ENCODE measurements at regions of chr12 and their contacts with region 1.

Region 1: DNA sequence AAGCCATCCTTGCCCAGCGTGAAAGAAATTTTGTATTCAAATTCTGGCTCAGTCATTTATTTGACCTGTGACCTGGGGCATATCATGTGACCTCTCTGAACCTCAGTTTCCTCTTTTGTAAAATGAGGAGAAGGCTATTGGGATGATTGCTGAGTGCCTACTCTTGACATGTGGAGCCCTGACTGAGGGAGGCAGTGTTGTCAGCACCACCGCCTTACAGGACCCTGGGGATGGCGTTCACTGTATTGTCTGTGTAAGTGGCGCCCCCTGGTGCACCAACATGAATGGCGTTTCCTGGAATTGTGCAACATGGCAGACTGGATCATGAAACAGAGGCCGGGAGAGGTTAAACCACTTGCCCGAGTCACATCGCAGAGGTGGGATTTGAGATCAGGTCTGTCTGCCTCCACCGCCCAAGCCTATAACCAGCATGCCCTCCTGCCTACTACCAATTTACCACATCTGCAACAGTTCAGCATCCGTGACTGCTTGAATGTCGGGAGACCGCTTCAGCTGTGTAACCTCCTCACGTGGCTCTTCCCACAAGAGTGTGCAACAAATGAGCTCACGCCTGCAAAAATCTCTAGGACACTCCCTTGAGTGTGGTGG is 20.1 kb upstream of the CCDC63 start:
- DNase-seq: peak; percentile 80
- H3K4me3 ChIP-seq: no peak overlapping the region
- H3K27ac ChIP-seq: no peak overlapping the region
- H3K4me1 ChIP-seq: no peaks in the 10 kb centered on the region
- H3K27me3 ChIP-seq: no peaks in the 10 kb centered on the region
- CTCF ChIP-seq: peak; percentile 80 to 83

Region 2: GRCh38 chr12:110513842-110514241 is 312.9 kb before region 1 on chr12:
- CTCF ChIA-PET with region 1: no interaction called
- dilution Hi-C with region 1: no loop called
- in situ Hi-C with region 1: no loop called
- intact Hi-C with region 1: loop called (anchors 10 kb)
- DNase-seq: no peak
- H3K4me3 ChIP-seq: no peak overlapping the region
- H3K27ac ChIP-seq: no peak overlapping the region
- H3K4me1 ChIP-seq: no peaks in the 10 kb centered on the region
- H3K27me3 ChIP-seq: no peaks in the 10 kb centered on the region
- CTCF ChIP-seq: no peak

Region 3: GRCh38 chr12:110704748-110705147 is 121.9 kb before region 1 on chr12:
- CTCF ChIA-PET with region 1: no interaction called
- dilution Hi-C with region 1: no loop called
- in situ Hi-C with region 1: loop called in 1 of 2 experiments (anchors 10 kb)
- intact Hi-C with region 1: loop called (anchors 1 kb)
- DNase-seq: peak; percentile 24
- H3K4me3 ChIP-seq: no peak overlapping the region
- H3K27ac ChIP-seq: no peak overlapping the region
- H3K4me1 ChIP-seq: no peaks in the 10 kb centered on the region
- H3K27me3 ChIP-seq: no peaks in the 10 kb centered on the region
- CTCF ChIP-seq: peak; percentile 39 to 75

Region 4: GRCh38 chr12:110742718-110743570 is 83.8 kb before region 1 on chr12 and contains the start of gene PPP1CC:
- CTCF ChIA-PET with region 1: no interaction called
- dilution Hi-C with region 1: no loop called
- in situ Hi-C with region 1: no loop called
- intact Hi-C with region 1: loop called (anchors 1 kb)
- DNase-seq: peak; percentile 90
- H3K4me3 ChIP-seq: peak within 1 kb of the TSS; percentile 69 to 85 (median 79)
- H3K27ac ChIP-seq: peak within 1 kb of the TSS; percentile 71
- H3K4me1 ChIP-seq: peaks cover 35% of the 10 kb centered on the region
- H3K27me3 ChIP-seq: no peaks in the 10 kb centered on the region
- CTCF ChIP-seq: no peak
- total RNA-seq, gene PPP1CC: 91.0 to 116 TPM

Region 5: DNA sequence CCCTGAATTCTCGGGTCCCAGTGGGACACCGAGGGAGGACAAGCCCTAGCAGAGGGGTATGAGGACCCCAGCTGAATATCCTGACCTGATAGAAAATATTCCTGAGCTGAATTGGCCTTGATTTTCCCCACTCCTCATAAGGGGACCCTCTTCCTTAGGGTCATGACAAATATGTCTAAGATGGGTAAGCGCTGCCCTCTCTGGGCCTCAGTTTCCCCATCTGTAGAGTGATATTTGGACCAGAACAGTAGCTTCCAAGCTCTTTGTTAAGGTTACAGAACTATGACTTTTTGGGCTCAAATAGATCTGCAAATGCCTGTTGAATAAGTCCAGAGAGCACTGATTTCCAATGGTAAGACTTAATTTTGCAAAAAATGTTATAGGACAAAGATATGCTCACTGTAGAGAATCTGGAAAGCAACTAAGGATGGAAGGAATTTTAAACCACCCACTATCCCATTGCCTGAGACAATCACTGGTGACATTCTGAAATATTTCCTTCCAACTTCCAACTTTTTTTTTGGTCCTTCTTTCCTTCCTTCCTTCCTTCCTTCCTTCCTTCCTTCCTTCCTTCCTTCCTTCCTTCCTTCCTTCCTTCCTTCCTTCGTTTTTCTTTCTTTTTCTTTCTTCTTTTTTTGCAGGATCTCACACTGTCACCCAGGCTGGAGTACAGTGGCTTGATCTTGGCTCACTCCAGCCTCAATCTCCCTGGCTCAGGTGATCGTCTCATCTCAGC is 61.7 kb after region 1 on chr12:
- CTCF ChIA-PET with region 1: interaction called, 3 read pairs
- dilution Hi-C with region 1: loop called (anchors 5 kb)
- in situ Hi-C with region 1: no loop called
- intact Hi-C with region 1: loop called (anchors 1 kb)
- DNase-seq: no peak
- H3K4me3 ChIP-seq: no peak overlapping the region
- H3K27ac ChIP-seq: no peak overlapping the region
- H3K4me1 ChIP-seq: peaks cover 9% of the 10 kb centered on the region
- H3K27me3 ChIP-seq: no peaks in the 10 kb centered on the region
- CTCF ChIP-seq: no peak